Activated naive CD4-positive, alpha-beta T cell treated with anti-CD3 and anti-CD28 coated beads, Interleukin-2, amount 10 ng/mL, durations not matched to agents 7 days and 5 days (primary cell): ENCODE measurements at regions of chr3 and their contacts with region 1.

Region 1: GRCh38 chr3:42229942-42230688 is 35.9 kb downstream of the CCK start:
- DNase-seq: no peak
- H3K4me3 Mint-ChIP-seq: no peak overlapping the region
- H3K27ac Mint-ChIP-seq: no peak overlapping the region
- H3K4me1 Mint-ChIP-seq: peaks cover 6% of the 10 kb centered on the region
- H3K27me3 Mint-ChIP-seq: peaks cover 42% of the 10 kb centered on the region

Region 2: DNA sequence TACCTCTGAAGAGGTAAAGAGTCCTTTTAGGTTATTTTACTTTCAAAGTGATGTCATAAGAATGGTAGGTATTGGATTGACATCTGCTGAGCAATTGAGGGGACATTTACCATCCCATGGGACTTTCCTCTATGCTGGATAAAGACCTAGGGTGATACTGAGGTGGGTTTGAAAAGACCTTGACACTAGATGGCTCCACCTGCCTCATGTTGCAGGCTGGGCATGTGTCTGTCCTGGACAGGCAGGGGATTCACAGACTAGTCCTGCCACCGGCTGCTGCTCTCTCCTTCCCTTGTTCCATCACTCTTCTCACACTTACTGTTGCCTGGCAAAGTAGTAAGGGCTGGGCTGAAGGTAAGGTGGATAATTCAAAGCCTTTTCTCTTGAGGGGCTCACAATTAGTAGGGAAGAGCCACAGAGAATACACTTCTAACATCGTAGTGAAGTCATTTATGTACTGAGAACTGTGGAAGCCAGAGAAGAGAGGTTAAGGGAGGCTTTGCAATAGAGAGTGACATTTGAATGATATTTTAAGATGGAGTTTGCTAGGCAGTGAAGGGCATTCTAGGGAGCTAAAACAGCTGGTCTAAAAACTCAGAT is 111.3 kb before region 1 on chr3:
- CTCF ChIA-PET with region 1: interaction called, 10 read pairs
- DNase-seq: peak; percentile 51
- H3K4me3 Mint-ChIP-seq: no peak overlapping the region
- H3K27ac Mint-ChIP-seq: no peak overlapping the region
- H3K4me1 Mint-ChIP-seq: peaks cover 18% of the 10 kb centered on the region
- H3K27me3 Mint-ChIP-seq: no peaks in the 10 kb centered on the region

Region 3: GRCh38 chr3:42148982-42149432 is 81.1 kb before region 1 on chr3:
- CTCF ChIA-PET with region 1: no interaction called
- DNase-seq: no peak
- H3K4me3 Mint-ChIP-seq: no peak overlapping the region
- H3K27ac Mint-ChIP-seq: no peak overlapping the region
- H3K4me1 Mint-ChIP-seq: peaks cover 19% of the 10 kb centered on the region
- H3K27me3 Mint-ChIP-seq: no peaks in the 10 kb centered on the region